ENCODE measurements at regions of chr21 and their contacts with region 1.

Region 1: DNA sequence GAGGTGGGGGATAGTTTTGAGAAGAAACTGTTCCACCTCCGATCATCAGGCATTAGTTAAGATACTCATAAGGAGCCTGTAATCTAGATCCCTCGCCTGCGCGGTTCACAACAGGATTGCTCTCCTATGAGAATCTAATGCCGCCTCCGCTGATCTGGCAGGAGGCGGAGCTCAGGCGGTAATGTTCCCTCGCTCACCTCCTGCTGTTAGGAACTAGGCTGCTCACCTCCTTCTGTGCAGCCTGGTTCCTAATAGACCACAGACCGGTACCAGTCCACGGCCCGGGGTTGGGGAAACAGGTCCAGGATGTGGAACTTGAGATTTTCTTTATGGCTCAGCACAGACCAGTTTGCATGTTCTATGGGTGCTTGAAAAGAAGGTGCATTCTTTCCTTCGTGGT is 27.2 kb upstream of the FAM3B start:
- DNase-seq: no peak
- ATAC-seq: no peak
- H3K4me3 ChIP-seq: no peak overlapping the region
- H3K27ac ChIP-seq: no peak overlapping the region
- H3K4me1 ChIP-seq: no peaks in the 10 kb centered on the region
- H3K27me3 ChIP-seq: no peaks in the 10 kb centered on the region
- CTCF ChIP-seq: no peak
- EP300 ChIP-seq: no peak
- POLR2A ChIP-seq: no peak
- RAD21 ChIP-seq: no peak

Region 2: GRCh38 chr21:41304068-41304720 is 14.8 kb after region 1 on chr21:
- CTCF ChIA-PET with region 1: no interaction called
- POLR2A ChIA-PET with region 1: no interaction called
- RAD21 ChIA-PET with region 1: no interaction called
- SMC1A ChIA-PET with region 1: no interaction called
- in situ Hi-C with region 1: no loop called
- intact Hi-C with region 1: no loop called
- DNase-seq: no peak
- ATAC-seq: no peak
- H3K4me3 ChIP-seq: no peak overlapping the region
- H3K27ac ChIP-seq: no peak overlapping the region
- H3K4me1 ChIP-seq: no peaks in the 10 kb centered on the region
- H3K27me3 ChIP-seq: peaks cover 0 to 2% of the 10 kb centered on the region in 2 experiments; a peak in 1 of 4 replicates
- CTCF ChIP-seq: no peak
- EP300 ChIP-seq: no peak
- POLR2A ChIP-seq: no peak
- RAD21 ChIP-seq: no peak

Region 3: DNA sequence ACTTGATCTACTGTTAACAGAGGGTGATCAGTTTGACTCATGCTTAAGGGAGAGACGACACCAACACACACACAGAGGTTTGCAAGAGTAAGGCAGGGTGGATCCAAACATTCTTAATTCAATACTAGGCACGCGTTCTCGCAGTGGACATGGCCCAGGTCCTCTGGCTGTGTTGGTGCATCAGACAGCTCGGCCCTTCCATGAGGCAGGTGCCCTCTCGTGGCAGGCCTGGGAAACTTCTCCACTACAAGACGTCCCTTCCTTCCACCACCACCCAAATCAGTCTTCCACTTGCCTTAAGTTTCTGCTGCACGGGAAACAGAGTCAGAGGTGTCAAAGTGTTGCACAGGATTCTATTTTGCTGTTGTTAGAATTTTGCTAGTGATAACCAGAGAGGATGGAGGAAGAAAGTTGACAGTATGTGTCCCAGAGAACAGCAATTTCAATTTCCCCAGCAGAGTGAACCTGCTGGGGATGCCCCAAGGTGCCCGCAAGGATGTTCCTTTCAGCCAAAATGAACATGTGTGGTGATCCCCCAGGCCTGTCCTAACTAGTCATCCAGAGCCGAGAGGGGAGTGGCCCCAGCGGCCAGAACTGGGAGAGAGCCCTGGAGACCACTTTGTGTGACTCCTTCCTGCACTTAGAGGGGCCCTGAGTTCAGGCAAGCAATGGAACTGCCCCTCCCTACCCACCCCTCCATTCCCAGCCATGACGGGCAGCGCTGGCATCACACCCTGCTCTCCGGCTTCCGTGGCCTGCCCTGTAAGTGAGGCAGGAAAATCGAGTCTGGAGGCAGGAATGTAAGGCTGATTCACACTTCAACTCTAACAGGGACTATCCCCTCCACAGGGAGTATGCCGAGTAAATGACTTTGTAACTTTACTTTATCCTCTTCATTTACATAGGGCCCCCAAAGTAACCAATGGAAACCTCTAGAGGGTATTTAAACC is 171.4 kb after region 1 on chr21:
- CTCF ChIA-PET with region 1: interaction called, 47 read pairs
- POLR2A ChIA-PET with region 1: no interaction called
- RAD21 ChIA-PET with region 1: interaction called, 26 read pairs
- SMC1A ChIA-PET with region 1: interaction called, 21 read pairs
- in situ Hi-C with region 1: loop called (anchors 5 kb)
- intact Hi-C with region 1: no loop called
- DNase-seq: no peak
- ATAC-seq: peak; percentile 89
- H3K4me3 ChIP-seq: no peak overlapping the region
- H3K27ac ChIP-seq: no peak overlapping the region
- H3K4me1 ChIP-seq: no peaks in the 10 kb centered on the region
- H3K27me3 ChIP-seq: no peaks in the 10 kb centered on the region
- CTCF ChIP-seq: peak; percentile 77 to 82 (median 81)
- EP300 ChIP-seq: no peak
- POLR2A ChIP-seq: peak; percentile 62; the same call in 1 of the 2 replicates
- RAD21 ChIP-seq: peak; percentile 60

Measured in GM12878 (cell line).